ENCODE measurements at regions of chr4 and their contacts with region 1.

Region 1: GRCh38 chr4:87006676-87007527 is 72.1 kb downstream of the AFF1 start:
- DNase-seq: peak; percentile 94
- H3K4me3 ChIP-seq: peak overlapping the region; percentile 58
- H3K27ac ChIP-seq: peak overlapping the region; percentile 98
- H3K4me1 ChIP-seq: peaks cover 9% of the 10 kb centered on the region
- H3K27me3 ChIP-seq: no peaks in the 10 kb centered on the region
- CTCF ChIP-seq: peak; percentile 17

Region 2: DNA sequence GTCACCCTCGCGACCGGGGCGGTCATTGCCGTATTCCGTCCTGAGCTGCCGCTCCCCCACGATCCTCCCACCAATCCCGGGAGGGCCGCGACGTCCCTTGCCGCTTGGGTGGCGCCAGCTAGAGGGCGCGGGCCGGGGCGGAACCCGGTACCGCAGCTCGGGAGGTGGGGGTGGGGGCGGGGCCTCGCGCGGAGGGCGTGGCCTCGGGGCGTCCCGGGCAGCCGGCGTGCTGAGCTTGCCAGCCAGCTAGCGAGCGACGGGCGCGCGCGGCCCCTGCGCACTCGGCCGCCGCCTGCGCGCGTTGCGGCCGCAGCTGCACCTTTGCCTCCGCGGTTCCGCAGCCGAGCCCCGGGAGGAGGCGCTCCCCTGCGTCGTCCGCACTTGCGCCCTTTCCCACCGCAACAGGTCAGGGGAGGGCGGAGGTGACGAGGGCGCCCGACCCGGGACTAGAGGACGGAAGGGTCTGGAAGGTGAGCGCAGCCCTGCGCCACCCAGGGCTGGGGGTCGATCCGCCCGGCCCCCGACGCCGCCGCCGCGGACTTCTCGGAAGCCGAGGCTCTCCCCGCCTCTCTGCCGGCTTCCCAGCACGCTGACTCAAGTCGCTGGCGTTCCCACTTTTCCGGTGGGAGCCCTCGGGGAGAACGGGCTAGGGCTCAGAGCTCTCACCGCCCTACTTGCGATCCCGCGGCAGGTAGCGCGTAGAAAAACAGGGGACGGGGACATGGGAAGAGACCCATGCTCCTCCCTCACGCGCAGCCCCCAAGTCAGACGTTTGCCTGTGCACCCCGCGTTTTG is 71.9 kb before region 1 on chr4 and contains the start of gene AFF1:
- intact Hi-C with region 1: loop called (anchors 1 kb)
- DNase-seq: peak; percentile 93
- H3K4me3 ChIP-seq: peak within 1 kb of the TSS; percentile 95
- H3K27ac ChIP-seq: peak within 1 kb of the TSS; percentile 99
- H3K4me1 ChIP-seq: peaks cover 6% of the 10 kb centered on the region
- H3K27me3 ChIP-seq: no peaks in the 10 kb centered on the region
- CTCF ChIP-seq: peak; percentile 36
- total RNA-seq, gene AFF1: 73.5 to 104 TPM

Region 3: DNA sequence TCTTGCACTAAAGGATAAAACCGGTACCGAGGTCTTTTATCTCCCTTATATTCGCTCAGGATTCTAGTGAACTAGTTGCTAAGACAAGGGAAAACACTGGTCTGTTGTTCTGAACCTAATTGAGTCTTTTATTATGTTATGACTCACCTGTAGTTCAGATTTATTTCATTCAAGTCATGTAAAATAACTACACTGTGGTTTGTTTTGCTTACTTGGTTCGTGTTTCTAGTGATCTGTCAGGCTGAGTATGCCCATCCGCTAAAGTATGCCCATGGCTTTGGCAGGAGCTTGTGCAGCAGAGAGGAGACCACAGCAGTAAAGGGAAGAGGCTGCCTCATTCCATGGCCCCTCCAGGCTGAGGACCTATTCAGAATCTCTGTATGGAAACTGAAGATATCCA is 54.1 kb after region 1 on chr4:
- intact Hi-C with region 1: loop called (anchors 10 kb)
- DNase-seq: no peak
- H3K4me3 ChIP-seq: no peak overlapping the region
- H3K27ac ChIP-seq: peak overlapping the region; percentile 56
- H3K4me1 ChIP-seq: no peaks in the 10 kb centered on the region
- H3K27me3 ChIP-seq: no peaks in the 10 kb centered on the region
- CTCF ChIP-seq: no peak

Region 4: DNA sequence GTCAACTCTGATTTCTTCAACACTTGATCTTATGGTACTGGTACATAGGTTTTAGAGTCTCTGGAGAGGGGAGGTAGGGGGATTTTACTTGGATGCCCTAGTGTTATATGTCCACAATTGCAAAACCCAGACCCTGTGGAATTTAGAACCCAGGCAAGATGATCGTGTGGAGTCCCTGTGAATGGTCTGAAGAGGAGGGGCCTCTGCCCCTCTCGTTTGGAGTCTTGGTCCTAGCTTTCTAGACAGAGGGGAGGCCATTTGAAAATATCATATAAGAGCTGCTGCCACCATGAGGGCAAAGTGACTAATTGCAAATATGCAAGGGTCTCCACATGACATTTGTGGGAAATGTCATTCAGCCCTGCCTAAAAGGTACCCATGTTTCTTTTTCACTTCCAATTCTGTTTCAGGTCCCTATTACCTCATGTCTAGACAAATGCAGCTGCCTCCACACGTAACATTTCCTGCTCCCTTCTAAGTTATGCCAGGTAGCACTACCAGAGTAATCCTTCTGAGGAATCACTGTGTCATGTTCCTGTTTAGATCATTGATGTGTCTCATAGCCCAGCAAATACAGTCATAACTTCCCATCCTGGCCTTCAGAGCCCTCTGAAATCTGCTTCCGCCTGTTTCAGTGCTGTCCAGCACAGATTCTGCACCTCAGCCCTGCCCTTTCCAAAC is 86.7 kb after region 1 on chr4:
- intact Hi-C with region 1: loop called (anchors 10 kb)
- DNase-seq: peak; percentile 48
- H3K4me3 ChIP-seq: no peak overlapping the region
- H3K27ac ChIP-seq: peak overlapping the region; percentile 34
- H3K4me1 ChIP-seq: no peaks in the 10 kb centered on the region
- H3K27me3 ChIP-seq: no peaks in the 10 kb centered on the region
- CTCF ChIP-seq: peak; percentile 48

Region 5: DNA sequence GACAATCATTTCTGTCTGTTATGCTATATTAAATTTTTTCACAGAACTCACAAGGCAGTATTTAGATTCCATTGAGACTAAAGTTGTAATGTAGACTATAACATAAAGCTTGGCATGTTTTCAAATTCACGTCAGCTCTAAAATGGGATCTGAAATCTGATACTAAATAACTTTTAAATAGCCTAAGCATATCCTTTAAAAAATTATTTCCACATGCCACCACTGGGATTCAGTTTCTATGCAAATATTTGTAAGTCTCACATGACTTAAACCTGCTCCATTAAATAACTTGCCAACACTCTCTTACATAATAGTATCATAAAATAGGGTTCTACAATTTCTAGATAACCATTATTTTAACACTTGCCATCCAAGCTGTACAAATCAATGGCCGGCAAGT is 181.1 kb after region 1 on chr4:
- intact Hi-C with region 1: no loop called
- DNase-seq: no peak
- H3K4me3 ChIP-seq: no peak overlapping the region
- H3K27ac ChIP-seq: no peak overlapping the region
- H3K4me1 ChIP-seq: no peaks in the 10 kb centered on the region
- H3K27me3 ChIP-seq: no peaks in the 10 kb centered on the region
- CTCF ChIP-seq: no peak

Region 6: GRCh38 chr4:87574996-87575395 is 568.1 kb after region 1 on chr4:
- intact Hi-C with region 1: no loop called
- DNase-seq: no peak
- H3K4me3 ChIP-seq: no peak overlapping the region
- H3K27ac ChIP-seq: no peak overlapping the region
- H3K4me1 ChIP-seq: no peaks in the 10 kb centered on the region
- H3K27me3 ChIP-seq: no peaks in the 10 kb centered on the region
- CTCF ChIP-seq: no peak